ENCODE measurements at regions of chr4 and their contacts with region 1.

Region 1: DNA sequence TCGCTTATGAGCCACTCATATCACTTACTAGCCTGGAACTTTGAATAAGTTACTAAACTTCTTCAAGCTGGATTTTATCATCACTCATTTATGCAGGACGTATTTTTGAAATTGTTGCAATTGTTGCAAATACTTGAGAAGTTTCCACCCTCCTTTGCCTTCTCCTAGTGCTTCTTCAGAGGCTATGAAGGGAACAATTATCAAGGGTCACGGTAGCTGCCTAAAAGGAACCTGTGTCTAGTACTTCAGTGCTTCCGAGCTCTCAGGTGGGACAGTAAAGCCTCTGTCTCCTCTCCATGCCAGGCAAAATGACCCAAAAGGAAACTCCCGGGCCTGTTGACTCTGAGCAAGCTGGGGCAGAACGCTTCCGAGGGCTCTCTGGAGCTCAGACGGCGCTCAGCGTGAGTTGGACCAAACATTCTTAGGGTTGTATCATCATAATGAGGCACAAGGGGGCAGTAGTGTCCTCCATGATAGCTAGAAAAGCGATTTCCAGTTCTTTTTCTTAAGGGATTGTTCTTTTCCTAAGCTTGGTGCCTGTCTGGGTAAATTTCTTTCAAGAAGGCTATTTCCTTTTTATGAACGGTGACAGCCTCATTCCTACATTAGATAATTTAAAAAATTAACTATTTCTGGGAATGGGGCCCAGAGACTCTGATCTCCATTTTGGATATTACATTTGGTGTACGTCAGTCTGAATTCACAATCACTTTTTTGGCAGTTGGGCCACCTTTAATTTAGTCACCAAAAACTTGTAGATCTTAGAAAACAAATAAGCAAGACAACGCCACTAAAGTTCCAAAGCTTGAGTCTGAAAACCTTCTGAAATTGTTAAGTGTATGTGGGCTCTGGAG is 73.1 kb downstream of the PACRGL start:
- DNase-seq: peak; percentile 52
- H3K4me3 ChIP-seq: peak overlapping the region in 1 of 2 experiments; percentile 17; a peak in 1 of 4 replicates
- H3K27ac ChIP-seq: no peak overlapping the region
- H3K4me1 ChIP-seq: peaks cover 0 to 2% of the 10 kb centered on the region in 2 experiments; a peak in 2 of 4 replicates
- H3K27me3 ChIP-seq: no peaks in the 10 kb centered on the region
- CTCF ChIP-seq: peak; percentile 78
- EP300 ChIP-seq: no peak
- RAD21 ChIP-seq: peak; percentile 88

Region 2: DNA sequence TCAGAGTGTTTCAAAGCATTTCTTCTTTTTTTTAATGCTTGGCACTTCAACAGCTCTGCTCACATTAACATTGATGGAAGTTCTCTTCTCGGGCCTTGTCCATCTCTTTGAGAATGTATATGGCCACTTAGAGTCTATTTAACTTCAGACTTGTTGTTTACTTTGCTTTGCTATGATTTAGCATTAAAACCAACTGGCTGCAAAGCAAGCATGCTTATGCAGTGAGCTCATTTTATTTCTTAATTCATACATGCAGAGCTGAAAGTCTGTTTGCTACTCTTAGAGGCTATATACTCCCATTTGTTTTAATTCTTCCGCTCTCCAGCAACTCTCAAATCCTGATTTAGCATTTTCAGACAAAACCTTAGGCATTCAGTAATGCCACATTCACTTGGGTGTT is 180.7 kb before region 1 on chr4:
- CTCF ChIA-PET with region 1: no interaction called
- POLR2A ChIA-PET with region 1: no interaction called
- DNase-seq: no peak
- H3K4me3 ChIP-seq: no peak overlapping the region
- H3K27ac ChIP-seq: no peak overlapping the region
- H3K4me1 ChIP-seq: peaks cover 0 to 7% of the 10 kb centered on the region in 2 experiments; a peak in 2 of 4 replicates
- H3K27me3 ChIP-seq: no peaks in the 10 kb centered on the region
- CTCF ChIP-seq: no peak
- EP300 ChIP-seq: no peak
- RAD21 ChIP-seq: no peak

Region 3: GRCh38 chr4:20760053-20760452 is 13.3 kb before region 1 on chr4:
- CTCF ChIA-PET with region 1: interaction called, 21 read pairs
- POLR2A ChIA-PET with region 1: no interaction called
- DNase-seq: no peak
- H3K4me3 ChIP-seq: no peak overlapping the region
- H3K27ac ChIP-seq: no peak overlapping the region
- H3K4me1 ChIP-seq: no peaks in the 10 kb centered on the region
- H3K27me3 ChIP-seq: no peaks in the 10 kb centered on the region
- CTCF ChIP-seq: no peak
- EP300 ChIP-seq: no peak
- RAD21 ChIP-seq: peak; percentile 49

Region 4: DNA sequence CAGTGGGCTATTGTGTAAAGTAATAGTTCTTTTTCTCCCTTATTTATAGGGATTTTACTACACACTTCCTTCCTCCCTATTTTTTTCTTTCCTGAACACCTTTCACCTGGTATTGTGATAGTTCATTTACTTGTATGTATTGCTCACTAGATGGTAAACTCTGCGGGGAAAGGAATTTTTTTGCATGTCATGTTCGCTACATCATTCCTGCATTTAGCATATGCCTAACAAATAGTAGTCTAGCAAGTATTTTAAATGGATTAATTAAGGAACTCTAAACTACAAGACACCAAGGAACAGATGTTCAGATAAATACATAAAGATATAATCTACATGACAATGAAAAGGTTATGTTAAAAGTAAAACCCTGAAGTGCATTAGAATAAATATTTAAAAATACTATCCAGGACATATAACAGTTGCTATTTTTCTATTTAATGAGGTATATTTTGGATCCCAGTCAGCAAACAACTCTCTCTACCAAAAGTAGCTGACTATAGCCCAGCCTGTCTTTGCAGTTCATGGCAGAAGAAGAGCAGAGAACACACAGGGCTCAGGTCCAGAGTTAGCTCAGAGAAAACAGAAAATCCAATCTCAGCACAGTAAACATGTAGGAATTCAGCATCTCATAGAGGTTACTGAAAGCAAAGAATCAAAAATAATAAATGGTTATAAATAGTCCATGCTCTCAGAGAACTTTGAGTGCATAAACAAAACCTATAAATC is 14.7 kb after region 1 on chr4:
- CTCF ChIA-PET with region 1: interaction called, 14 read pairs
- POLR2A ChIA-PET with region 1: no interaction called
- DNase-seq: no peak
- H3K4me3 ChIP-seq: no peak overlapping the region
- H3K27ac ChIP-seq: peak overlapping the region in 1 of 2 experiments; percentile 34; a peak in 1 of 4 replicates
- H3K4me1 ChIP-seq: no peaks in the 10 kb centered on the region; a peak in 2 of 4 replicates
- H3K27me3 ChIP-seq: no peaks in the 10 kb centered on the region
- CTCF ChIP-seq: no peak
- EP300 ChIP-seq: no peak
- RAD21 ChIP-seq: no peak

Region 5: DNA sequence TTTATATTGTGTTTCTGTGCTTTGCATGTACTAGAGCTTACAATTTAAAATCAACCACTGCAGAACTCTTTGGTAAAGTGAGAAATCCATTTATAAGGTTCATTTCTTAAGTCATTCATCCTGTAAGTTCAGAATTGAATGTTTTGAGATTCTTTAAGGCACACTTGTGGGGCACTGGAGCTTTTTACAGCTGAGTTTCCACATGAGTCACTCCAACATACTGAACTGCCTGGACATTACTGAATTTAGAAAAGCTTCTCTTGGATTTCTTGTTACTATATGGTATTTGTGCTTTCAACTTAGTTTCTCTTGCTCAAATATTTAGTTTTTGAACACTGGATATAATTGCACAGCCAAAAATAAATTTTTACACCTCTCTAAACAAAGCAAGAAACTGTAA is 153.2 kb after region 1 on chr4:
- CTCF ChIA-PET with region 1: no interaction called
- POLR2A ChIA-PET with region 1: no interaction called
- DNase-seq: no peak
- H3K4me3 ChIP-seq: no peak overlapping the region
- H3K27ac ChIP-seq: no peak overlapping the region
- H3K4me1 ChIP-seq: no peaks in the 10 kb centered on the region
- H3K27me3 ChIP-seq: no peaks in the 10 kb centered on the region
- CTCF ChIP-seq: no peak
- EP300 ChIP-seq: no peak
- RAD21 ChIP-seq: no peak

Region 6: DNA sequence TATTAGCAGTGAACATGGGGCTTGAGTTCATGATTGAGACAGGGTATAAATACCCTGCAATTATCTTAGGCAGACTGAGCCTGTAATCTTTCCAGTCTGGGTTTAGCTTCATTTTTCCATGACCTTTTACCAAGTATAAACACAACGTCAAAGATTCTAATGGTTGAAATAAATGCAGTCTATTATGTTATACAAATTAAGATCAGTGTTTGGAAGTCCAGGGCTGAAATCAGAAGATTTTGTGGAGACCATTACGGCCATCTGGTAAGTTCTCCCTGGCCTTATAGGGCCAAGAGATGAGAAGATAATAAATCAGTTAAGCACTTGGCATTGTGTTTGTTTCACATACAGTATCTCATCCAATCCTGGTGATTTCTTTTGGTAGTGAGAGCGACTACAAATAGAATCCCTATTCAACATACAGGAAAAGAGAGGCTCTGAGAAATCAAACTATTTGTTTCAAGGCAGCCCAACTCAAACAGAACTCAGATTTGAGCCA is 352.7 kb after region 1 on chr4:
- CTCF ChIA-PET with region 1: interaction called, 10 read pairs
- POLR2A ChIA-PET with region 1: no interaction called
- DNase-seq: peak; percentile 13
- H3K4me3 ChIP-seq: no peak overlapping the region
- H3K27ac ChIP-seq: no peak overlapping the region
- H3K4me1 ChIP-seq: no peaks in the 10 kb centered on the region
- H3K27me3 ChIP-seq: no peaks in the 10 kb centered on the region
- CTCF ChIP-seq: no peak
- EP300 ChIP-seq: no peak
- RAD21 ChIP-seq: no peak

Region 7: GRCh38 chr4:21134994-21135393 is 361.6 kb after region 1 on chr4:
- CTCF ChIA-PET with region 1: interaction called, 43 read pairs
- POLR2A ChIA-PET with region 1: no interaction called
- DNase-seq: peak; percentile 38
- H3K4me3 ChIP-seq: no peak overlapping the region
- H3K27ac ChIP-seq: no peak overlapping the region
- H3K4me1 ChIP-seq: no peaks in the 10 kb centered on the region
- H3K27me3 ChIP-seq: no peaks in the 10 kb centered on the region
- CTCF ChIP-seq: peak; percentile 60
- EP300 ChIP-seq: no peak
- RAD21 ChIP-seq: peak; percentile 81

Region 8: GRCh38 chr4:21469438-21470300 is 696.3 kb after region 1 on chr4:
- CTCF ChIA-PET with region 1: interaction called, 80 read pairs
- POLR2A ChIA-PET with region 1: no interaction called
- DNase-seq: peak; percentile 20
- H3K4me3 ChIP-seq: no peak overlapping the region; a peak in 1 of 4 replicates
- H3K27ac ChIP-seq: peak overlapping the region in 1 of 2 experiments; percentile 72; a peak in 2 of 4 replicates
- H3K4me1 ChIP-seq: peaks cover 0 to 16% of the 10 kb centered on the region in 2 experiments; a peak in 2 of 4 replicates
- H3K27me3 ChIP-seq: no peaks in the 10 kb centered on the region
- CTCF ChIP-seq: peak; percentile 71
- EP300 ChIP-seq: no peak
- RAD21 ChIP-seq: peak; percentile 83

Region 9: GRCh38 chr4:21512353-21512752 is 739.0 kb after region 1 on chr4:
- CTCF ChIA-PET with region 1: interaction called, 16 read pairs
- POLR2A ChIA-PET with region 1: no interaction called
- DNase-seq: peak; percentile 46
- H3K4me3 ChIP-seq: no peak overlapping the region; a peak in 1 of 4 replicates
- H3K27ac ChIP-seq: peak overlapping the region in 1 of 2 experiments; percentile 69; a peak in 2 of 4 replicates
- H3K4me1 ChIP-seq: peaks cover 0 to 9% of the 10 kb centered on the region in 2 experiments; a peak in 2 of 4 replicates
- H3K27me3 ChIP-seq: no peaks in the 10 kb centered on the region
- CTCF ChIP-seq: peak; percentile 69
- EP300 ChIP-seq: no peak
- RAD21 ChIP-seq: peak; percentile 98

Measured in SK-N-SH (cell line).